GM12878 (cell line): ENCODE measurements at regions of chr15 and their contacts with region 1.

Region 1: GRCh38 chr15:59492389-59493377 is 54.7 kb downstream of the FAM81A start:
- DNase-seq: peak; percentile 40
- ATAC-seq: peak; percentile 97
- H3K4me3 ChIP-seq: no peak overlapping the region
- H3K27ac ChIP-seq: no peak overlapping the region
- H3K4me1 ChIP-seq: peaks cover 6% of the 10 kb centered on the region
- H3K27me3 ChIP-seq: no peaks in the 10 kb centered on the region
- CTCF ChIP-seq: peak; percentile 75 to 92 (median 90)
- EP300 ChIP-seq: no peak
- POLR2A ChIP-seq: no peak
- RAD21 ChIP-seq: peak; percentile 94

Region 2: GRCh38 chr15:58957101-58957973 is 535.3 kb before region 1 on chr15:
- CTCF ChIA-PET with region 1: interaction called, 15 read pairs
- POLR2A ChIA-PET with region 1: no interaction called
- RAD21 ChIA-PET with region 1: interaction called, 8 read pairs
- SMC1A ChIA-PET with region 1: interaction called, 8 read pairs
- in situ Hi-C with region 1: no loop called
- intact Hi-C with region 1: loop called (anchors 2 kb)
- DNase-seq: no peak
- ATAC-seq: peak; percentile 98
- H3K4me3 ChIP-seq: no peak overlapping the region
- H3K27ac ChIP-seq: no peak overlapping the region
- H3K4me1 ChIP-seq: peaks cover 11% of the 10 kb centered on the region
- H3K27me3 ChIP-seq: no peaks in the 10 kb centered on the region
- CTCF ChIP-seq: peak; percentile 79 to 87 (median 81)
- EP300 ChIP-seq: no peak
- POLR2A ChIP-seq: no peak
- RAD21 ChIP-seq: peak; percentile 82

Region 3: DNA sequence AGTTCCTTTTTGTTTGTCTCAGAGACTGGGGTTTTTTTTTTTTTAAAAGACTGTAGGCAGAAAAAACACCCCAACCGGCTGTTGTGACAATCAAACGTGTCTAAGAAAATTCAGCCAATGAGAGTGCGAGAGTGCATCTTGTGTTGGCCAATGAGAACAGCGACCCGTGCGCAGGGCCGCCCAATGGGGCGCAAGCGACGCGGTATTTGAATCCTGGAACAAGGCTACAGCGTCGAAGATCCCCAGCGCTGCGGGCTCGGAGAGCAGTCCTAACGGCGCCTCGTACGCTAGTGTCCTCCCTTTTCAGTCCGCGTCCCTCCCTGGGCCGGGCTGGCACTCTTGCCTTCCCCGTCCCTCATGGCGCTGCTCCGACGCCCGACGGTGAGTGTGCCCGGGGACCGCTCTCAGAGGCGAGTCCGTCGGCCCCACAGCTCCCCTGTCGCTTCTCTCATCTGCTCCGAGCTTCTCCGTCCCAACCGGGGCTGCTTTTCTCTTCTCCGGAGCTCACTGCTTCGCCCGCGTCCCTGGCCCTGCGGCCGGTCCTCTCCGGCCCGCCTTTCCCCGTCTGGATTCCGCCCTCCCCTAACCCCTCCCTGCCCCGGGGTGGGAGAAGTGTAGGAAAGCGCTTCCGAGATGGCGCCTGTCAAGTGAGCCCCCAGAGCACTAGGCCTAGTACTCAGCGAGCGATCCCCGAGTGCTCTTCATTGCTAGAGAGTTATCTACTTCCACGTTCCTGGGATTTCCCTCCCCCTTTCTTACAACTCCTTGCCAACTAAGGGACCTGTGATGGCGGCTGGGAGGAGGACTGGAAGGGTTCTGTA is 387.6 kb before region 1 on chr15 and contains the start of gene CCNB2:
- CTCF ChIA-PET with region 1: interaction called, 10 read pairs
- POLR2A ChIA-PET with region 1: no interaction called
- RAD21 ChIA-PET with region 1: interaction called, 8 read pairs
- SMC1A ChIA-PET with region 1: interaction called, 8 read pairs
- in situ Hi-C with region 1: no loop called
- intact Hi-C with region 1: no loop called
- DNase-seq: peak; percentile 85
- ATAC-seq: peak; percentile 100
- H3K4me3 ChIP-seq: peak within 1 kb of the TSS; percentile 95
- H3K27ac ChIP-seq: peak within 1 kb of the TSS; percentile 86
- H3K4me1 ChIP-seq: peaks cover 4% of the 10 kb centered on the region; the same call in 1 of the 2 replicates
- H3K27me3 ChIP-seq: no peaks in the 10 kb centered on the region
- CTCF ChIP-seq: no peak
- EP300 ChIP-seq: no peak
- POLR2A ChIP-seq: peak; percentile 98
- RAD21 ChIP-seq: no peak
- polyA plus RNA-seq, gene CCNB2: 205 to 211 TPM

Region 4: DNA sequence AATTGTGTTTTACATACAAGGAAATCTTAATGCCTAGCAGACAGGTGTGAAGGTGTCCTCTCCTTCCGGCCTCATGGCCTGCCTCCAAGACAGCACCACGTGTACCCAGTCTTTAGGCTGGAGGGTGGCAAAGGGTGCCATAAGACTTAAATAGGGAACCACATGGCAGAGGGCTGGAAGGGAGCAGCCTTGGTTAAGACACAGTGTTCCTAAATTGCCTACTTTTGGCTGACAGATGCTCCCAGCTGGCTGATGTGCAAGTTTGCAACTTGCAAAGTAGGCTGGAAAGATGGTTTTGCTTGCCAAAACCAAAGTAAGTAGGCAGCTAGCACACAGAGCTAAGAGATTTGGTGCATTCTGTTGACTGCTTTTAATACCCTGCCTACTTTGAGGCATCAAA is 342.5 kb before region 1 on chr15:
- CTCF ChIA-PET with region 1: no interaction called
- POLR2A ChIA-PET with region 1: no interaction called
- RAD21 ChIA-PET with region 1: no interaction called
- SMC1A ChIA-PET with region 1: no interaction called
- in situ Hi-C with region 1: loop called (anchors 5 kb)
- intact Hi-C with region 1: no loop called
- DNase-seq: no peak
- ATAC-seq: no peak
- H3K4me3 ChIP-seq: no peak overlapping the region
- H3K27ac ChIP-seq: no peak overlapping the region
- H3K4me1 ChIP-seq: no peaks in the 10 kb centered on the region
- H3K27me3 ChIP-seq: no peaks in the 10 kb centered on the region
- CTCF ChIP-seq: no peak
- EP300 ChIP-seq: no peak
- POLR2A ChIP-seq: no peak
- RAD21 ChIP-seq: no peak

Region 5: GRCh38 chr15:59174835-59175831 is 317.6 kb before region 1 on chr15:
- CTCF ChIA-PET with region 1: interaction called, 19 read pairs
- POLR2A ChIA-PET with region 1: no interaction called
- RAD21 ChIA-PET with region 1: interaction called, 5 read pairs
- SMC1A ChIA-PET with region 1: interaction called, 8 read pairs
- in situ Hi-C with region 1: no loop called
- intact Hi-C with region 1: no loop called
- DNase-seq: no peak
- ATAC-seq: peak; percentile 78
- H3K4me3 ChIP-seq: no peak overlapping the region
- H3K27ac ChIP-seq: no peak overlapping the region
- H3K4me1 ChIP-seq: no peaks in the 10 kb centered on the region; the same call in 1 of the 2 replicates
- H3K27me3 ChIP-seq: no peaks in the 10 kb centered on the region
- CTCF ChIP-seq: peak; percentile 28 to 36 (median 31); a peak in 3 of 6 replicates
- EP300 ChIP-seq: no peak
- POLR2A ChIP-seq: no peak
- RAD21 ChIP-seq: 0 out of 2 replicates have a peak, but pooled peaks have one; percentile 12

Region 6: DNA sequence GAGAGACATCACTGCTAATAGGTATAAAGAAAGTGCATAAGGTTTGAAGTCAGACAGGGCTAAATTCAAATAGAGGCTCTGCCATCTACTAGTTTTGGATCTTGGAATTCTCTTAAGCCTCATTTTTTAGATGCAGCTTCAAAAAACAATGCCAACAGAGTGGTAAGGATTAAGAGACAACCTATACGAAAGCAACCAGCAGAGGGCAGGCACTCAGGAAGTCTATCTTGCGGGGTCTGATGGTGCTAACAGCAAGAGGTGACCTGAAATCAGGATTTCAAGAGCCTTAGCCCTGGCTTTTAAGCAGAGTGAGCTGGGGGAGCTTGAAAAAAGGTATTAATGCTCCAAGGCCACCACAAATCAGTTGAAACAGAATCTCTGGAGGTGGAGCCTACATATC is 245.3 kb before region 1 on chr15:
- CTCF ChIA-PET with region 1: interaction called, 45 read pairs
- POLR2A ChIA-PET with region 1: no interaction called
- RAD21 ChIA-PET with region 1: interaction called, 3 read pairs
- SMC1A ChIA-PET with region 1: interaction called, 4 read pairs
- in situ Hi-C with region 1: no loop called
- intact Hi-C with region 1: loop called (anchors 2 kb)
- DNase-seq: no peak
- ATAC-seq: peak; percentile 61
- H3K4me3 ChIP-seq: no peak overlapping the region
- H3K27ac ChIP-seq: peak overlapping the region; percentile 33; the same call in 1 of the 2 replicates
- H3K4me1 ChIP-seq: peaks cover 54% of the 10 kb centered on the region
- H3K27me3 ChIP-seq: no peaks in the 10 kb centered on the region
- CTCF ChIP-seq: peak; percentile 57 to 68 (median 62)
- EP300 ChIP-seq: no peak
- POLR2A ChIP-seq: no peak
- RAD21 ChIP-seq: peak; percentile 70

Region 7: GRCh38 chr15:59516655-59517461 is 24.2 kb after region 1 on chr15:
- CTCF ChIA-PET with region 1: interaction called, 12 read pairs
- POLR2A ChIA-PET with region 1: no interaction called
- RAD21 ChIA-PET with region 1: interaction called, 3 read pairs
- SMC1A ChIA-PET with region 1: interaction called, 3 read pairs
- in situ Hi-C with region 1: no loop called
- intact Hi-C with region 1: no loop called
- DNase-seq: no peak
- ATAC-seq: peak; percentile 83
- H3K4me3 ChIP-seq: peak overlapping the region; percentile 35
- H3K27ac ChIP-seq: peak overlapping the region; percentile 93
- H3K4me1 ChIP-seq: peaks cover 27% of the 10 kb centered on the region
- H3K27me3 ChIP-seq: no peaks in the 10 kb centered on the region
- CTCF ChIP-seq: no peak
- EP300 ChIP-seq: no peak
- POLR2A ChIP-seq: no peak
- RAD21 ChIP-seq: no peak

Region 8: DNA sequence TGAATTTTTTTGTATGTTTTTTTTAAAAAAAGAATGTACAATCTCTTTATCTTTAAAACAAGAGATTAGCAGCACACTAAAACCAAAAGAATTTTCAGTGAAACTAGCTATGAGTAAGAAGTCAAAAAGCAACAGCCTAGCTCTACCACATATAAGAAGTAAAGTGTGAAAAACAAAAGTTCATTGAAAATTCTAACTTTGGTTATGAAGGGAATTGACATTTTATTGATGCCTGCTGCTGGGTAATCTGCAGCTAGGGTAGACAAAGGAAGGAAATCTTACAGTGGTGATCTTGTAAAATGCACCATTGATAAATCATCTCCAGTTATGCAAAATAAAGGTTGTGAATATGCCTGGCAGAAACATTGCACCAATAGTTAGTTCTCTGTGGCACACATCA is 473.6 kb after region 1 on chr15:
- CTCF ChIA-PET with region 1: no interaction called
- POLR2A ChIA-PET with region 1: no interaction called
- RAD21 ChIA-PET with region 1: no interaction called
- SMC1A ChIA-PET with region 1: no interaction called
- in situ Hi-C with region 1: no loop called
- intact Hi-C with region 1: no loop called
- DNase-seq: no peak
- ATAC-seq: no peak
- H3K4me3 ChIP-seq: no peak overlapping the region
- H3K27ac ChIP-seq: no peak overlapping the region
- H3K4me1 ChIP-seq: no peaks in the 10 kb centered on the region
- H3K27me3 ChIP-seq: no peaks in the 10 kb centered on the region
- CTCF ChIP-seq: no peak
- EP300 ChIP-seq: no peak
- POLR2A ChIP-seq: no peak
- RAD21 ChIP-seq: no peak